Ascending aorta (tissue), 2 donors: ENCODE measurements at regions of chr10 and their contacts with region 1.

Region 1: GRCh38 chr10:122298598-122299301 is 27.7 kb downstream of the BTBD16 start:
- DNase-seq: peak in 1 of 2 donors; percentile 85
- H3K4me3 ChIP-seq: peak overlapping the region in 1 of 2 donors; percentile 45
- H3K27ac ChIP-seq: no peak overlapping the region
- H3K4me1 ChIP-seq: no peaks in the 10 kb centered on the region
- H3K27me3 ChIP-seq: no peaks in the 10 kb centered on the region
- CTCF ChIP-seq: peak; percentile 88 to 94 (median 92)

Region 2: GRCh38 chr10:122191936-122192541 is 106.7 kb before region 1 on chr10:
- intact Hi-C with region 1: no loop called
- DNase-seq: no peak
- H3K4me3 ChIP-seq: no peak overlapping the region
- H3K27ac ChIP-seq: no peak overlapping the region
- H3K4me1 ChIP-seq: no peaks in the 10 kb centered on the region
- H3K27me3 ChIP-seq: no peaks in the 10 kb centered on the region
- CTCF ChIP-seq: no peak

Region 3: DNA sequence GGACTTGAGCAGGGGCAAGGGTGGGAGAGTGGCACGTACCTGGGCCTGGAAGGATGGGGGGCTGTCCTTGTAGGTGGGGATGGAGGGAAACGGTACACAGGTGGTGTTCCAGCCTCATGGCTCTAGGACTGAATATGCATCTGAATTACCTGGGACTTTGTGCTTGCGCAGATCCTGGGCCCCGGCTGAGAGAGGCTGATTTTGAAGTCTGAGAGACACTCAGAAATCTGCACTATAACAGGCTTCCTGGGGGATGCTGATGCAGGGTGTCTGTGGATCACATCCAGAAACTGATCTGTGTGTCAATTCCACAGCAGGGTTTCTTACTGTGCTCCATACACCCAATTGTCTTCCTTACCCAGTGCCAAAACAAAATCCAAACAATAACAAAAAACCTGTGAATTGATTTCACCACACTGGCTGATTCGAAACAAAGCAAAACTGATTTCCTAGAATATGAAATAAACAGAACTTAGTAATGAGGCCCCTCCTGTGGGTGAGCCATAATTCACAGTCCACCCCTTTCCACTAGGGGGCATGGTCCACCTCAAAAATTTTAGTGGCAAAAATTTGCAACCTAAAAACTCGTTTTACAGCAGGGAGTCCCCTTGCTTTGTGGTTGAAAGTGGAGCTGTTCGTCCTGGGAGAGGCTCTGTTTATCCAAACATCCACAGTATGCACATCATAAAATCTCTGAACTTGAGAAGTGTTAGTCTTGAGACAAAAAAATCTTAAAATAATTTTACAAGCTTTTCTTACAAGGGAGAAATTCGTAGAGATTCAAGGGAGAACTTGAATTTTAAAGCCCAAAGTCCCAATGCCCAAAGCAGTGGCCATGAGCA is 43.8 kb after region 1 on chr10:
- intact Hi-C with region 1: loop called (anchors 2 kb)
- DNase-seq: no peak
- H3K4me3 ChIP-seq: no peak overlapping the region
- H3K27ac ChIP-seq: no peak overlapping the region
- H3K4me1 ChIP-seq: no peaks in the 10 kb centered on the region
- H3K27me3 ChIP-seq: no peaks in the 10 kb centered on the region
- CTCF ChIP-seq: peak; percentile 60 to 82 (median 69)

Region 4: DNA sequence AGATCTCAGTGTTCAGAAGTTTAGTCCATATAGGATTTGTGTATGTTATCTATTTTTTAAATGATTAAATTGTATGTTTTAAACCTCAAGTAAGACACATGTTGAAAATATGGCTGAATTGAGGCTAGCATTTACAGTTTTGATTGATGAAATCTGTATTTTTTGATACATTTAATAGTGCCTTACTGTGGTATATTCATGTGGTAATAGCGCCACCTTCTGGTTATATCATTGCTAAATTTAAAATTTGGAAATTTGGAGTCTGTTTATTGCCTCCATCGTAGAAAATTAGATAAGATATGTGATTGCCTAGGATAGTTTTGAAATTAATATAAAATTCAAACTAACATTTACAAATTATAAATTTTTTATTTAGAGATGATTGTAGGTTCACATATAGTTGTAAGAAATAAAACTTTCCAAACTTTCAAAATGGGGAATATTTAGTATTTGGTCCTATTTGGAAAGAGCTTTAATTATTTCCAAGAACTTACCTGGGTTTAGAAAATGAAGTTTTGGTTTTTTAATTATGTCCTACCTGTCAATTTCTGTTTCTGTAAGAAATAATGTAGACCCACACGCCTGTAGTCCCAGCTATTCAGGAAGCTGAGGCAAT is 136.6 kb after region 1 on chr10:
- intact Hi-C with region 1: loop called (anchors 1 kb)
- DNase-seq: no peak
- H3K4me3 ChIP-seq: no peak overlapping the region
- H3K27ac ChIP-seq: no peak overlapping the region
- H3K4me1 ChIP-seq: no peaks in the 10 kb centered on the region
- H3K27me3 ChIP-seq: no peaks in the 10 kb centered on the region
- CTCF ChIP-seq: peak; percentile 56 to 70 (median 68)

Region 5: GRCh38 chr10:122565728-122566206 is 267.0 kb after region 1 on chr10:
- intact Hi-C with region 1: loop called (anchors 2 kb)
- DNase-seq: peak in 1 of 2 donors; percentile 87
- H3K4me3 ChIP-seq: peak overlapping the region; percentile 4 to 49
- H3K27ac ChIP-seq: no peak overlapping the region
- H3K4me1 ChIP-seq: no peaks in the 10 kb centered on the region
- H3K27me3 ChIP-seq: no peaks in the 10 kb centered on the region
- CTCF ChIP-seq: peak; percentile 70 to 88 (median 79)

Region 6: DNA sequence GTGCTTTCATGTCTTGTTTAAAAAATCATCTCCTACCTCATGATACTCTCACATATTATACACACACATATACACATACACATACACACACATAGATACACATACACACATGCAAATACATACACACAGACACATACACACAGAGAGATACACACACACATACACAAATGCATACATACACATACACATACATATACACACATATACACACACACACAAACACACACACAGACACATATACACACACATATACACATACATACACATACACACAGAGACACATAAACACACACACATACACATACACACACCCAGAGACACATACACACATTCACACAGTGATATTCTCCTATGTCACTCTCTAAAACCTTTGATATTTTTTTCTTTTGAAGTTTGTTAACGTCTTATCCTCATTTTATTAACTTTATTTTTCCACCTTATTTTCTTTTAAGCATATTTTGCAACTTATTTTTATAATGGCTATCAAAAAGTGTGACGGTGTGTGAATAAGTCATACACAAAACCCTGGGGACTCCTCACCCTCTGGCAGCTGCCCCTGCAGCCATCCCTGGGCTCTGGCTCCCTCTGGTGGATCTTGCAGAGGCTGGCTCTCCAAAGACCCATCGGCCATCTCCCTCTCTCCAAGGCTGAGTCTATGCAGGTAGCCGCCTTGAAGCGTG is 404.8 kb after region 1 on chr10:
- intact Hi-C with region 1: loop called (anchors 5 kb)
- DNase-seq: peak in 1 of 2 donors; percentile 67
- H3K4me3 ChIP-seq: no peak overlapping the region
- H3K27ac ChIP-seq: no peak overlapping the region
- H3K4me1 ChIP-seq: no peaks in the 10 kb centered on the region
- H3K27me3 ChIP-seq: no peaks in the 10 kb centered on the region
- CTCF ChIP-seq: peak; percentile 36 to 72 (median 42)